ENCODE measurements at regions of chr12 and their contacts with region 1.

Region 1: DNA sequence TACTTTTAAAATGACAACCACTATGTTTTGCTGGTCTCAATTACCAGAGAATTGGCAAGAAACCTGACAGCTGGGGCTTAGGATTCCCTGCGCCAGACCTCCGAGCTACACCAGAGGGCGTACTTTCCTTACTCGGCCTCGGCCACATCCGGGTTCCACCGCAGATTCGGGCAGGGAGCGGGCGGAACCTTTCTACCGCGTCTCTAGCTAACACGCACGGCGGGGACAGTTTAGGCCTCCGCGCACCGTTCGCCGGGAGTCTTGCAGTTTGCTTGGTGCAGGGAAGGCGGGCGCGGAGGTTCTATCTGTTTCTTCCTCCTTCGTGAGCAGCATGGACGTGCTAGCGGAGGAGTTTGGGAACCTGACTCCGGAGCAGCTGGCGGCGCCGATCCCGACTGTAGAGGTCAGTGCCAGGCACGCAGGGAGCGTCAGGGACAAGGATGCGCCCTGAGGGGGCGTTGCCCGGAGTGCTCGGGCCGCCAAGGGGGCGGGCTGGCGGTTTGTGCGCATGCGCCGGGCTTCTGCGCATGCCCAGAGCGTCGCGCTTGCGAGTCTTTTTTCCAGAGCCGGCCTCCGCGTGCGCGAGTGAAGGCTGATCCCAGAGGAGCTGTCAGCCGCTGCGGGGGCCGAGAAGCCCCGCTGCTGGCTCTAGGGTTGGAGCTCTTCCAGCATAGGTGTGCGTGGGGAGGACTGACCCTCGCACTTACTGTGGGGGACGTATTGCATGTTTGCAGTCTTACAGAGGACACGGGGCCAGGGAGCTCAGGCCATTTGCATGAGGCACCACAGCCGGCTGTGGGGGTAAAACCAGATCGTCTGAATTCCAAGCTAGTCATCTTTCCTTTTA is at the start of gene POLR3B:
- DNase-seq: peak; percentile 64
- H3K4me3 ChIP-seq: peak within 1 kb of the TSS; percentile 77
- H3K27me3 ChIP-seq: no peaks in the 10 kb centered on the region
- CTCF ChIP-seq: peak; percentile 94
- polyA plus RNA-seq, gene POLR3B: 6.4 and 11.1 TPM in 2 replicates

Region 2: DNA sequence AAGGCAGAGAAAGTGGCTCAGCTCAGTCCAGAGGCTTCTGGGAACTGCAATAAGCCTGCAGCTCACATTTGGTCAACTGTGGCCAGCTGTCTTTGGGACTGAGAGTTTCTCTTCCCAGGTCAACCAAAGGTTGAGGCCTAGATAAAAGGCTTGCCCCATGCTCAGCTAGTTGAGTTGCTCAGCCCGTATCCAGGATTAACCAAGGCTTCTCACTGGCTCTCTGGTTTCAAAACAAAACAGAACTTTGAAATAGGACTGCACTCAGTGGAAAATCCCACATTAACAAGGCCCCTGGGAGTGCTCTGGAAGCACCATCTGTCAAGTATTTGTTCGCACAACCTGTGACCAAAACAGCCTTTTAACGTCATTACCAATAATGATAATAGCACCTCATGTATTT is 178.7 kb before region 1 on chr12:
- CTCF ChIA-PET with region 1: no interaction called
- POLR2A ChIA-PET with region 1: no interaction called
- DNase-seq: no peak
- H3K4me3 ChIP-seq: no peak overlapping the region
- H3K27me3 ChIP-seq: peaks cover 3% of the 10 kb centered on the region
- CTCF ChIP-seq: no peak

Region 3: GRCh38 chr12:106246891-106247673 is 110.7 kb before region 1 on chr12:
- CTCF ChIA-PET with region 1: interaction called, 11 read pairs
- POLR2A ChIA-PET with region 1: no interaction called
- DNase-seq: no peak
- H3K4me3 ChIP-seq: peak overlapping the region; percentile 82
- H3K27me3 ChIP-seq: no peaks in the 10 kb centered on the region
- CTCF ChIP-seq: 0 out of 2 replicates have a peak, but pooled peaks have one; percentile 7

Region 4: GRCh38 chr12:106276032-106276740 is 81.6 kb before region 1 on chr12:
- CTCF ChIA-PET with region 1: no interaction called
- POLR2A ChIA-PET with region 1: no interaction called
- DNase-seq: no peak
- H3K4me3 ChIP-seq: no peak overlapping the region
- H3K27me3 ChIP-seq: no peaks in the 10 kb centered on the region
- CTCF ChIP-seq: no peak

Region 5: DNA sequence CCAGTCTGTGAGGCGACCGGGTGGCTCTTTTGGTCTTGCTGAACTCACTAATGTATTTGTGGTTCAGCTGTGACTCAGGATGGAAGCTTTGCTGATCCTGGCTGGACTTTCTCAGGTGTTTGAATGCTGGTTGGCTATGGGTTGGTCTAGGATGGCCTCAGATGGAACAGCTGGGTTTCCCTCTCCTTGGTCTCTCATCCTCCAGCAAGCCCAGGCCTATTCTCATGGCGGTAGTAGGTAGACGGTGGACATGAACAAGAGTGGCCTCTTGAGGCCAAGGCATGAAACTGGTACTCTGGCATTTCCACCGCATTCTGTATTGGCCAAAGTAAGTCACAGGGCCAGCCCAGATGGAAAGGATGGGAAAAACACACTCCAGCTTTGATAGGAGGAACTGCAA is 12.0 kb before region 1 on chr12:
- CTCF ChIA-PET with region 1: interaction called, 15 read pairs
- POLR2A ChIA-PET with region 1: interaction called, 3 read pairs
- DNase-seq: no peak
- H3K4me3 ChIP-seq: no peak overlapping the region
- H3K27me3 ChIP-seq: no peaks in the 10 kb centered on the region
- CTCF ChIP-seq: peak; percentile 36; the same call in 1 of the 2 replicates

Region 6: DNA sequence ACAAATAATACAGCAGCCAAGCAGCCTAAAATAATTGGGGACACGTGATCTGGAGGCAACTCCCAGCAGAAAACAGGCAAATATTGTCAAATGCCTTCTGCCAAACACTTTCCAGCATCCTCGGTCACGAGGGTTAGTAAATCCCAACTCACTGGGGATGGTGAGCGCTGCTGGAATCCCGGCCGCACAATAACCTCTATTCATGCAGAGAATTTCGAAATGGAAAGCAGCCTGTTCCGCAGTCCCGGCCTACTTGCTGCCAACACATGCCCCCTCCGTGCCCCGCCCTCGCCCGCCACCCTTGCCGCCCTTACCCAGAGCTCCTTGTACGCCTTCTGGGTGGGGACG is 287.3 kb after region 1 on chr12:
- CTCF ChIA-PET with region 1: no interaction called
- POLR2A ChIA-PET with region 1: no interaction called
- DNase-seq: no peak
- H3K4me3 ChIP-seq: no peak overlapping the region
- H3K27me3 ChIP-seq: no peaks in the 10 kb centered on the region
- CTCF ChIP-seq: no peak

Region 7: DNA sequence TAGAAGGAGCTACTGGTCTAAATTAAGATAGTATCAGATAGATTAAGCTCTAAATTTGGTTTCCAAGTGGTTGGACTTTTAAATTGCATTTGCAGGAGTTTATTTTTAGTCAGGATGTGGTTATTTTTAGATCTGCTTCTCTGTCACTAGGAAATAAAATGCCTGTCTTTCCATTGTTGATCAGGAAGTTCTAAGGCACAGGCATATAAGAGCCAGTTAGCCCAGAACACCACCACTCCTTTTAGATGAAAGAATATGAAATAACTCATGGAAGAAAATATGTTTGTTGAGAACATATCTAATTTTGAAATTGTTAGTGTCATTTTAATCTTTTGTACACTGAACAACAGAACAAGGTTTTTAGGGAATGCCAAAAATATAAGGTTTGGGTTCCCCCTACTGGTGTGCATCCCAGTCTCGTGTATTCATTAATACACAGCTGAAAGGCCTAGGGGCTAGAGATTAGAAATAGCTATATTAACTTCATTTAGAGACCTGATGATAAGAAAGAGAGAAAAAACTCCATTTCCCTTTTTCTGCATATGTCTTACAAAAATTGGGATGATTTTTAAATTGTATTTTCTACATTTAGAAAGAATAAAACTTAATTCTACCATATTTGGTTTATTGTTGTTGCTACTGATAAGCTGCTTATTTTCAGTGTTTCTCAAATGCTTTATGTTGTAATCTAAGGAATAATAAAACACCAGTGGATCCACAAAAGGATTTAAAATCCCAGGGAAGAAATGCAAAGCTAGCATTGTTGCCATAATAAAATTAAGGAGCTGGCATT is 483.9 kb after region 1 on chr12:
- CTCF ChIA-PET with region 1: interaction called, 17 read pairs
- POLR2A ChIA-PET with region 1: no interaction called
- DNase-seq: peak; percentile 18
- H3K4me3 ChIP-seq: no peak overlapping the region
- H3K27me3 ChIP-seq: no peaks in the 10 kb centered on the region
- CTCF ChIP-seq: peak; percentile 70

Region 8: DNA sequence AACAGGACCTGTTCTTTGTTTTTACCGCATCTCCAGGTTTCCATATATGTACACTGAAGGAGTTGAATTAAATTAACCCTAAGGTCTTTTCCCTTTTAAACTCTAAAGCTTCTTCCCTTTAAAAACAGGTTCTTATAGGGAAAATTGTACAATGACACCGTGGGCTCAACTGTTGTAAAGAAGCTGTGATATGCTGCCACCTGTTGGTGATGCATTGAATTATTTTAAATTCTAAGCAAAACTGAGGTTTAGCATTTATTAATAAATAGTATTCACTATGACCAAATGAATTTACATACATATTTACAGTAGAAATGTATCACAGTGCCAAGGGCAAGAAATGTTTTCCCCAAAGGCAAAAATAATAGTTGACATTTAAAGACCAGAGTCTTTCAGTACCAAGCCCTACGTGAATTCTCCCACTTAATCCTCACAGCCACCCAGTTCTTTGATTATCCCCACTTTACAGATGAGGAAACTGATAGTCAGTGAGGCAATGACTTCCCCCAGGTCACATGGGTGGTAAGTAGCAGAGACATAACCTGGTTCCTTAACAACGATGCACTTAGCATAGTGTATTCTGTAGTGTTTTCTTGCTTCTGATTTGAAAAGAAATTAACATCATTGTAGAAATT is 562.3 kb after region 1 on chr12:
- CTCF ChIA-PET with region 1: interaction called, 17 read pairs
- POLR2A ChIA-PET with region 1: no interaction called
- DNase-seq: no peak
- H3K4me3 ChIP-seq: no peak overlapping the region
- H3K27me3 ChIP-seq: peaks cover 2% of the 10 kb centered on the region; the same call in 1 of the 2 replicates
- CTCF ChIP-seq: peak; percentile 64